Right ventricle myocardium inferior (tissue), 1 donor: ENCODE measurements at regions of chr5 and their contacts with region 1.

Region 1: GRCh38 chr5:58498340-58498942 is 7.2 kb downstream of the GAPT start:
- DNase-seq: no peak
- ATAC-seq: no peak

Region 2: DNA sequence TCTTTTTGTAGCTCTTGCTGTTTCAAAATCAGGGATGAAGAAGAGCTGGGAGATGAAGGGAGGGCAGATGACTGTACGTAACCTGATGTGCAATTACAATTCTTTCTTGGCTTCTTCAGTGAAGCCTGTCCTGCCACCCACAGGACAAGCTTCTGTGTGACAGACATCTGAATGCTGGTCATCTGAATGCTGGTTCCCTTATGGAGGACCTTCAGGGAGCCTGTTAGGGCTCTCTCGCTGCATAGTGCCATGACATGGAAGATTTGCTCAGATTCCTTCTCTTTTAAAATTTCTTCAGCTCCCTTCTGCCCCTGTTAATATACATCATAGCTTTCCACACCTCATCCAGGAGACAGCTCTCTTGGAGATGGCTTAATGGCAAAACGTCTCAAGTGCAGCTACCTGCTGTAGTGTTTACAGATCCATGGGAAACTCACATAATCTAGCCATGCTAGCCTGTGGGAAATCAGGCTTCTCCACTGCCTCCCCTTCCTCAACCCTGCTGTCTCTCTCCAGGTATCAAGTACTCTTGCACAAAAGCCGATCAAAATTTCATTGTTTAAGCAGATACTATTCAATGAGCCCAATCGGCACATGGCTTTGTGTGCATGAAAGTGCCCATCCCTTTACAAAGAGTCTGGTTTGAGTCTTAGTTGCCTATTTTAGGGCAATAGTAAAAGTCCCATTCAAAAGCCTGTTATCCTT is 219.0 kb after region 1 on chr5:
- intact Hi-C with region 1: loop called (anchors 2 kb)
- DNase-seq: no peak
- ATAC-seq: no peak

Region 3: DNA sequence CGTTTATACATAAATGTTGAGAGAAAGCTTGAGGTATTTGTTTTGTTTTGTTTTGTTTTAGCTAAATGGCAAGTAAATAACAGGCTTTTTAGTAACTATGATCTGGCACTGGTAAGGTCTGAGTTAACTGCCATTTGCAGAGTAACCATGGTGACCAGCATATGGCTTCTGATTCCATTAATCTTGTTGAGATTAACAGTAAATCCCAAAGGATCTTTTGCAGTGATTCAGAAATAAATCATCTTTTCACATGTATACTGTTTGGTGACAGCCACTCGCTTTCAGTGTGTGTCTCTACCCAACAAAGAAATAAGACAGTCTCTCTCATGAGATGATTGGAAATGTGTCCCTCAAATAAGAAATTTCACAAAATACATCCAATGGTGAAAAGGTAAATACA is 320.0 kb after region 1 on chr5:
- intact Hi-C with region 1: loop called (anchors 10 kb)
- DNase-seq: no peak
- ATAC-seq: no peak

Region 4: GRCh38 chr5:58849921-58850667 is 351.7 kb after region 1 on chr5:
- intact Hi-C with region 1: loop called (anchors 2 kb)
- DNase-seq: no peak
- ATAC-seq: peak; percentile 54